Activated CD4-positive, alpha-beta memory T cell treated with anti-CD3 and anti-CD28 coated beads for 36 hours (primary cell): ENCODE measurements at regions of chr2 and their contacts with region 1.

Region 1: DNA sequence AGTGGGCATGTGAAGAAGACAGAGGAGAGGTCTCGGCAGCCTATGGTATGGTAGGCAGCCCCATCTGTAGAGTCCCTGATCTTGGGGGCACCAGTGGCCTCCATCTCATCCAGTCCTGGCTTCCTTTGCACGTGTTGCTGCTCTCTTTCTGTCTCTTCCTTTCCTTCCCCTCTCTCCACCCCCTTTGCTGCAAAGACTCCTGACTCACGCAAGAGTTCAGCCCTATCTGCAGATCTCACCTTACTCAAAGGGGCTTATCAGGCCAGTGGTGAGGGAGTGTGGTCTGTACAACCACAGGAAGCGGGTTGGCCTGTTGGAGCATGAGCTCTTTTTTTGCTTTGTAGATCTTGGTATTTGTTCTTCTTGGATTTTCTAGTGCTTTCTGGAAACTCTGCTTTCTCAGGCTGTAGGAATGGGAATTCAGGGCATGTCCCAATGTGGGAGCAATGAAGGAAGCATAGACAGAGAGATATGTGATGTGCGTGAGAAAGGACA is 14.6 kb upstream of the NT5DC4 start:
- DNase-seq: peak; percentile 89
- H3K4me3 Mint-ChIP-seq: no peak overlapping the region
- H3K27ac Mint-ChIP-seq: peak overlapping the region; percentile 52
- H3K4me1 Mint-ChIP-seq: peaks cover 47% of the 10 kb centered on the region
- H3K27me3 Mint-ChIP-seq: peaks cover 6% of the 10 kb centered on the region

Region 2: DNA sequence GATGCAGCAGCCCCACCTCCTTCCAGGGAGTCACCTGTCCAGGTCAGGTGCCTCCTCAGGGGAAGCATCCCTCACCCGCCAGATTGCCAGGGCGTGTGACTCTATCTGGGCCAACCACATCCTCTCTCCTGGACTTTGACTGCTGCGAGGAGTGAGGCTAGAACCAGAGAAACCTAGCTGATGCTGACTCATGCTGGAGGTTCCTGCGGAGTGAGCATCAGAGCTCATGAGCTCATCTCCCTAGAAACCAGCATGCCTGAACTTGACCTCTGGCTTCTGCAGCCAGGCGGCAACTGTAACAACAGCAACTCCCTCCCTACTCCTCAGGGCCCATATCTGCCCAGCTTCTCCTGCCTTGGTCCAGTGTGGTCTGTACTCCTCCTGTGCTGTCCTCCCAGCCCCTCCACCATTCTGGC is 13.7 kb before region 1 on chr2:
- CTCF ChIA-PET with region 1: interaction called, 45 read pairs
- POLR2A ChIA-PET with region 1: interaction called, 8 read pairs
- intact Hi-C with region 1: loop called (anchors 1 kb)
- DNase-seq: peak; percentile 87
- H3K4me3 Mint-ChIP-seq: peak overlapping the region; percentile 30
- H3K27ac Mint-ChIP-seq: peak overlapping the region; percentile 84
- H3K4me1 Mint-ChIP-seq: peaks cover 33% of the 10 kb centered on the region
- H3K27me3 Mint-ChIP-seq: no peaks in the 10 kb centered on the region